ENCODE measurements at regions of chr4 and their contacts with region 1.

Region 1: GRCh38 chr4:115090483-115091075 is 22.8 kb downstream of the NDST4 start:
- DNase-seq: no peak
- H3K4me3 Mint-ChIP-seq: no peak overlapping the region
- H3K27ac Mint-ChIP-seq: no peak overlapping the region
- H3K4me1 Mint-ChIP-seq: no peaks in the 10 kb centered on the region
- H3K27me3 Mint-ChIP-seq: no peaks in the 10 kb centered on the region

Region 2: GRCh38 chr4:114879916-114880669 is 210.5 kb before region 1 on chr4:
- intact Hi-C with region 1: no loop called
- DNase-seq: no peak
- H3K4me3 Mint-ChIP-seq: no peak overlapping the region
- H3K27ac Mint-ChIP-seq: no peak overlapping the region
- H3K4me1 Mint-ChIP-seq: no peaks in the 10 kb centered on the region
- H3K27me3 Mint-ChIP-seq: peaks cover 2% of the 10 kb centered on the region

Region 3: DNA sequence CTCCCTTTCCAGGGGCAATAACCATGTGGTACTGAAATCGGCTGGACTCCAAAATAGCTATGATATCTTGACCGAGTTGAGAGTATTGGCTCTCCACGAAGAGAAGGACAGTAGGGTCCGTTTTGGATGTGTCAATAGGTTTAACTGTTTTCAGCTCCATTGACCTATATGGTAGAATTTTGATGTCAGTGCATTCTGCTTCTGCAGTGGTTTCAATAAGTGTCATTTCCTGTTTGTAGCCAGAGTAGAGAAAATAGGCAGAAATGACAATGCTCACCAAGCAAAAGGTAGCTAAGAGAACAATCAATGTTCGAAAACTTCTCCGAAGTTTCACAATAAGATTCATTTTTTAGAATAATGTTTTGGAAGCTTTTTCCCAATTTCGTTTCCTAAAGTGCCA is 13.9 kb before region 1 on chr4:
- intact Hi-C with region 1: no loop called
- DNase-seq: no peak
- H3K4me3 Mint-ChIP-seq: no peak overlapping the region
- H3K27ac Mint-ChIP-seq: no peak overlapping the region
- H3K4me1 Mint-ChIP-seq: no peaks in the 10 kb centered on the region
- H3K27me3 Mint-ChIP-seq: no peaks in the 10 kb centered on the region

Region 4: DNA sequence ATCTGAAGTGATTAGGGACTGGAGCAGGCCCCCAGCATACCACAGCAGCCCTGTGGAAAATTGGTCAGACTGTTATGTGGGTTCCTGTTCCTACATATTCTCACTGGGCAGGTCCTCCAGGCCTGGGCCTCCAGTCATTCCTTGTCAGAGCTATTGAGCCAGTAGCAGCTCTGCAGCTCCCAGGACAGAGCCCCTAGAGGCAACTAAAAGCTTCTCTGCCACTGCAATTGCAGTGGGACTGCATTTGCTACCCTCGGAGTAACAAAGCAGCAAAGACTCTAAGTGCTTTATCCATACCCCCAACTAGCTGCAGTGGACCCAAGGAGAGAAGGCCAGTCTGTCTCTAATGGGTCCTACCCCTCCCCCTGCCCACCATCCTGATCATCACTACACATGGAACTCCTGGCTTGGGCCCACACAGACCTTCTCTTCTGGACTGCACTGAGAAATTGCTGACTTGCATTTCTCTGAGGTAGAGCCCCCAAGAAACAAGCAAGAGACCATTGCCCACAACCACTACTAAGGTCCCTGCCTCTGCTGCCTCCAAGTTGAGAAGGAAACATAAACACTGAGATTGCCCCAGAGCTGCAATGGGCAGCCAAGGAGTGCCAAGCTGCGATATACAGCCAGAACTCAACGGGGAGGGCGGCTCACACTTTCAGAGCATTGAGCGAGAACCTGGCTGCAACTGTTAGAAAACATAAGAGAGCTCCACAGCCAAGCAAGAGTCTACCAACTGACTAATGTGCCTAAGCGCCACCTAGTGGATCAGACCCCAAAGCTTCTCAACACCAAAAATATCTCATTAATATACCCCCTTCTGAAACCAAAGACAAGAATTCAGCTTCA is 761.6 kb after region 1 on chr4:
- intact Hi-C with region 1: loop called (anchors 2 kb)
- DNase-seq: no peak
- H3K4me3 Mint-ChIP-seq: no peak overlapping the region
- H3K27ac Mint-ChIP-seq: no peak overlapping the region
- H3K4me1 Mint-ChIP-seq: no peaks in the 10 kb centered on the region
- H3K27me3 Mint-ChIP-seq: no peaks in the 10 kb centered on the region

Measured in activated T-helper 1 cell treated with anti-CD3 and anti-CD28 coated beads, Interleukin-12 subunit alpha, Interleukin-12 subunit beta, Interleukin-2, Interleukin-4 antibody, amounts not matched to agents 30 ng/mL and 10 ng/mL and 1 ng/mL, durations not matched to agents 14 hours and 24 hours and 36 hours (primary cell).